ENCODE measurements at regions of chr1 and their contacts with region 1.

Region 1: DNA sequence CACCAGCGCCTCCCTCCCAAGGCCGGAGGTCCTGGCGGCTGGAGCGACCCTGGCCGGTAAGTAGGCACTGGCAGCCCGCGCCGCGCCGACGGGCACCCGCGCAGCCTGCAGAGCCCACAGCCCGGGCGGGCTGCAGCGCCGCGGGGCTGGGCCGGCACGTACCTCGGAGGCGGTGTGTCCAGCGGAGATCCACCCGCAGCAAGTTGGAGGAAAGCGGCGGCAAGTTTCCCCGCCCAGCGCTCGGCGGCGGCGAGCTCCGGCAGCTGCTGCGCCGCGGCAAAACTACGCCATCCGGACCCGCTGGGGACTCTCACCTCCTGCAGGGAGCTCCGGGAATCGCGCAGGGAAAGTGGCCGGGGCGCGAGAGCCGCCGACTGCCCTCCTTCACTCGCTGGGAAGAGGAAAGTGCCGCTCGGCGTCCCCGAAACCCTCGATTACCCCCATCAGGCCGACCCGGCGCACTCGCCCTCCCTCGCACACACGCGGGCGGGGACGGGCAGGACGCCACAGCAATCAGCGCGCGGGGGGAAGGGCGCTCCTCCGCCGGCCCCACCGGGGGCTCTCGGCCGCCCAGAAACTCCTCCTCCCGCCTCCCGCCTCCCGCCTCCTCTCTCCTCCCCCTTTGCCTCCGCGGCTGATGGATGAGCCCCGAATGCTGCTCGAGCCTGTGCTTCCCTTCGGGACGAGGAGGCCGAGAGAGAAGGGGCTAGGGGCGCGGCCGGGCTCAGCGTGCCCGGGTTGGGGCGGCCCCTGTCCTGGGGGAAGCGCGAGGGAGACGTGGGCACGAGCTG is at the start of gene TGFBR3:
- DNase-seq: peak; percentile 90
- ATAC-seq: peak; percentile 93
- H3K4me3 ChIP-seq: peak within 1 kb of the TSS; percentile 90
- H3K27ac ChIP-seq: peak within 1 kb of the TSS; percentile 78
- H3K4me1 ChIP-seq: peaks cover 7% of the 10 kb centered on the region
- H3K27me3 ChIP-seq: no peaks in the 10 kb centered on the region
- CTCF ChIP-seq: peak; percentile 59
- POLR2A ChIP-seq: peak; percentile 73
- RAD21 ChIP-seq: peak; percentile 62
- total RNA-seq, gene TGFBR3: 8.3 and 11.3 TPM in 2 replicates

Region 2: GRCh38 chr1:91582431-91582921 is 303.4 kb before region 1 on chr1:
- CTCF ChIA-PET with region 1: interaction called, 3 read pairs
- POLR2A ChIA-PET with region 1: no interaction called
- dilution Hi-C with region 1: no loop called
- in situ Hi-C with region 1: no loop called
- intact Hi-C with region 1: loop called (anchors 1 kb)
- DNase-seq: peak; percentile 100
- ATAC-seq: peak; percentile 82
- H3K4me3 ChIP-seq: no peak overlapping the region
- H3K27ac ChIP-seq: peak overlapping the region; percentile 95
- H3K4me1 ChIP-seq: peaks cover 19% of the 10 kb centered on the region
- H3K27me3 ChIP-seq: no peaks in the 10 kb centered on the region
- CTCF ChIP-seq: no peak
- POLR2A ChIP-seq: no peak
- RAD21 ChIP-seq: 0 out of 2 replicates have a peak, but pooled peaks have one; percentile 8

Region 3: GRCh38 chr1:91761295-91761721 is 124.6 kb before region 1 on chr1:
- CTCF ChIA-PET with region 1: interaction called, 3 read pairs
- POLR2A ChIA-PET with region 1: interaction called, 12 read pairs
- dilution Hi-C with region 1: no loop called
- in situ Hi-C with region 1: no loop called
- intact Hi-C with region 1: no loop called
- DNase-seq: no peak
- ATAC-seq: no peak
- H3K4me3 ChIP-seq: no peak overlapping the region
- H3K27ac ChIP-seq: no peak overlapping the region
- H3K4me1 ChIP-seq: peaks cover 10% of the 10 kb centered on the region
- H3K27me3 ChIP-seq: no peaks in the 10 kb centered on the region
- CTCF ChIP-seq: no peak
- POLR2A ChIP-seq: no peak
- RAD21 ChIP-seq: no peak

Region 4: GRCh38 chr1:91830242-91831131 is 55.4 kb before region 1 on chr1:
- CTCF ChIA-PET with region 1: interaction called, 4 read pairs
- POLR2A ChIA-PET with region 1: no interaction called
- dilution Hi-C with region 1: no loop called
- in situ Hi-C with region 1: no loop called
- intact Hi-C with region 1: loop called (anchors 5 kb)
- DNase-seq: peak; percentile 91
- ATAC-seq: peak; percentile 91
- H3K4me3 ChIP-seq: no peak overlapping the region
- H3K27ac ChIP-seq: peak overlapping the region; percentile 3; the same call in 1 of the 2 replicates
- H3K4me1 ChIP-seq: peaks cover 12% of the 10 kb centered on the region
- H3K27me3 ChIP-seq: no peaks in the 10 kb centered on the region
- CTCF ChIP-seq: peak; percentile 85
- POLR2A ChIP-seq: peak; percentile 42; the same call in 1 of the 2 replicates
- RAD21 ChIP-seq: peak; percentile 60

Region 5: DNA sequence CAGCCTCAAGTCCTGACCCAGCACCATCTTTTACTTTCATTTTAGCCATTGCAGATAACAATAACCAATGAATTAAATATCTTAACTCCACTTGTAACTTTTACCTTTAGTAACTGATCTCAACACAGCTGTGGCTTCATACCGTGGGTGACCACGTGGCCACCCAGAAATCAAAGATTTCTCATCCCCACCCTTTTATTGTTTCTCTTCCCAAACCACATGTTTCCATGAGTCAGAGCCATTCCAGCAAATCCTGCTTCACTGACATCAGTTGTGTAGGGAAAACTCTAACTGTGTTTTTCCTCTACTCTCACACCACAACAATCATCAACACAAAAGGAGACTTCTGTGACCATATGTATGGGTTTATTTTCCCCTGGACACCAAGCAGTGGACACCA is 38.2 kb after region 1 on chr1:
- CTCF ChIA-PET with region 1: no interaction called
- POLR2A ChIA-PET with region 1: no interaction called
- dilution Hi-C with region 1: no loop called
- in situ Hi-C with region 1: no loop called
- intact Hi-C with region 1: loop called (anchors 2 kb)
- DNase-seq: peak; percentile 91
- ATAC-seq: peak; percentile 75
- H3K4me3 ChIP-seq: no peak overlapping the region
- H3K27ac ChIP-seq: no peak overlapping the region
- H3K4me1 ChIP-seq: peaks cover 4% of the 10 kb centered on the region
- H3K27me3 ChIP-seq: no peaks in the 10 kb centered on the region
- CTCF ChIP-seq: no peak
- POLR2A ChIP-seq: no peak
- RAD21 ChIP-seq: no peak

Region 6: DNA sequence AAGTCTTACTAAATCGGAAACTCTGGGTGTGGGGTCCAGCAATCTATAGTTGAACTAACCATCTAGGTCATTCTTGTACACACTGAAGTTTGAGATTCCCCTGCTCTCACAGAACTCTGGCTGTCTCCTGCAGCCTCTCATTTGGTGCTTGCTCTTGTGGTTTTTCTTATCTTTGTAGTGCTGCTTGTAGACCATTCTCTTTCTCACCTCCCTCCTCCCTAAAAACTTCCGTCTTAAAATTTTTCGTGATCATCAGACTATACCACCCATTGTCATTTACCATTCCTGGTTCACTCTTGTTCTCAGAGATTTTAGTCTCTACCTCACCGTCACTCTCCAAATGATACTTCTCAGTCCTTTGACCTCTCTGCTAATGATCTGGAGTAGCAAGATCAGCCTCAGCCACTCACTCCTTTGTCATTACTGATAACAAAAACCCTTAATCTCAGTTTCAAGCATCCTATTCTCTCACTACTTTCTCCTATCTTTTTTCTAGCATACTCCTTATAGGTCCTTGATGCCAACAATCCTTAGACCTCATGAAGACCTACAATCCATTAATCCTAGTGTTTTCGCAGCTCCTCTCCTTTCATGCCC is 130.9 kb after region 1 on chr1:
- CTCF ChIA-PET with region 1: no interaction called
- POLR2A ChIA-PET with region 1: no interaction called
- dilution Hi-C with region 1: no loop called
- in situ Hi-C with region 1: no loop called
- intact Hi-C with region 1: no loop called
- DNase-seq: no peak
- ATAC-seq: no peak
- H3K4me3 ChIP-seq: no peak overlapping the region
- H3K27ac ChIP-seq: no peak overlapping the region
- H3K4me1 ChIP-seq: no peaks in the 10 kb centered on the region
- H3K27me3 ChIP-seq: no peaks in the 10 kb centered on the region
- CTCF ChIP-seq: no peak
- POLR2A ChIP-seq: no peak
- RAD21 ChIP-seq: no peak